GM13976 (cell line): ENCODE measurements at regions of chr13 and their contacts with region 1.

Region 1: GRCh38 chr13:44969551-44970484 is 19.5 kb downstream of the NUFIP1 start:
- DNase-seq: peak; percentile 32
- CTCF ChIP-seq: peak; percentile 58

Region 2: GRCh38 chr13:44484562-44485138 is 485.2 kb before region 1 on chr13:
- in situ Hi-C with region 1: loop called (anchors 10 kb)
- DNase-seq: no peak
- CTCF ChIP-seq: no peak